WTC11 (cell line): ENCODE measurements at regions of chr3 and their contacts with region 1.

Region 1: GRCh38 chr3:45656575-45657363 is 32.4 kb upstream of the SACM1L start:
- DNase-seq: peak; percentile 87
- ATAC-seq: peak; percentile 92
- H3K4me3 Mint-ChIP-seq: no peak overlapping the region
- H3K27ac Mint-ChIP-seq: no peak overlapping the region; the same call in 1 of the 2 replicates
- H3K4me1 Mint-ChIP-seq: peaks cover 21% of the 10 kb centered on the region
- H3K27me3 Mint-ChIP-seq: no peaks in the 10 kb centered on the region
- CTCF ChIP-seq: peak; percentile 85

Region 2: DNA sequence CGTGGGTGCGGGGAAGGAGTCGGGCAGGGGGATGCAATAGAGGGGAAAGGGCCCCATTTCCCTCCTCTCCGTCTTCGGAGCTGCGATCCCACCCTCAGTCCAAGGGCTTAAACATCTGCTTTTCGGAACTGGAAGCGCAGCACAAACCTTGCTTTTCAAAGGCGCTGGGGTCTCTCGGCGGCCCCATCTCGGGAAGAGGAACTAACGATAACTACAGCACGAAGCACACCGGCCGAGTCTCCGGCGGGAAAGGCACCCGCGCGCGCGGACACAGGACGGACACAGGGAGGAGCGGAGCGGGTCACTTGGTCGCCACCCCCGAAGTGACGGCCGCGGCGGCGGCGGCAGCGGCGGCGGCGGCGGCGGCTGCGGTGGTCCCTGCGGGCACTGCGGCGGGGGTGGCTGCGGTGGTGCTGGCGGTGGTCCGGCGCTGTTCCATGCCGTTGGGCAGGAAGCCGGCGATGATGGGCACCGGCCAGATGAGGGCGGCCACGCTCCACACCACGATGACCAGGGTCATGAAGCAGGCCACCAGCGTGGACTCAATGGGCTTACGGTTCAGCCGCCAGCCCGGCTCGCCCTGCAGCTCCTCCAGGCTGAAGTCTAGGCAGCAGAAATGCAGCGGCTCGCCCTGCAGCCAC is 431.8 kb before region 1 on chr3:
- CTCF ChIA-PET with region 1: interaction called, 12 read pairs
- POLR2A ChIA-PET with region 1: no interaction called
- DNase-seq: peak; percentile 81
- ATAC-seq: peak; percentile 73
- H3K4me3 Mint-ChIP-seq: peak overlapping the region; percentile 91
- H3K27ac Mint-ChIP-seq: no peak overlapping the region
- H3K4me1 Mint-ChIP-seq: peaks cover 34% of the 10 kb centered on the region
- H3K27me3 Mint-ChIP-seq: peaks cover 33% of the 10 kb centered on the region
- CTCF ChIP-seq: peak; percentile 17; the same call in 1 of the 2 replicates

Region 3: DNA sequence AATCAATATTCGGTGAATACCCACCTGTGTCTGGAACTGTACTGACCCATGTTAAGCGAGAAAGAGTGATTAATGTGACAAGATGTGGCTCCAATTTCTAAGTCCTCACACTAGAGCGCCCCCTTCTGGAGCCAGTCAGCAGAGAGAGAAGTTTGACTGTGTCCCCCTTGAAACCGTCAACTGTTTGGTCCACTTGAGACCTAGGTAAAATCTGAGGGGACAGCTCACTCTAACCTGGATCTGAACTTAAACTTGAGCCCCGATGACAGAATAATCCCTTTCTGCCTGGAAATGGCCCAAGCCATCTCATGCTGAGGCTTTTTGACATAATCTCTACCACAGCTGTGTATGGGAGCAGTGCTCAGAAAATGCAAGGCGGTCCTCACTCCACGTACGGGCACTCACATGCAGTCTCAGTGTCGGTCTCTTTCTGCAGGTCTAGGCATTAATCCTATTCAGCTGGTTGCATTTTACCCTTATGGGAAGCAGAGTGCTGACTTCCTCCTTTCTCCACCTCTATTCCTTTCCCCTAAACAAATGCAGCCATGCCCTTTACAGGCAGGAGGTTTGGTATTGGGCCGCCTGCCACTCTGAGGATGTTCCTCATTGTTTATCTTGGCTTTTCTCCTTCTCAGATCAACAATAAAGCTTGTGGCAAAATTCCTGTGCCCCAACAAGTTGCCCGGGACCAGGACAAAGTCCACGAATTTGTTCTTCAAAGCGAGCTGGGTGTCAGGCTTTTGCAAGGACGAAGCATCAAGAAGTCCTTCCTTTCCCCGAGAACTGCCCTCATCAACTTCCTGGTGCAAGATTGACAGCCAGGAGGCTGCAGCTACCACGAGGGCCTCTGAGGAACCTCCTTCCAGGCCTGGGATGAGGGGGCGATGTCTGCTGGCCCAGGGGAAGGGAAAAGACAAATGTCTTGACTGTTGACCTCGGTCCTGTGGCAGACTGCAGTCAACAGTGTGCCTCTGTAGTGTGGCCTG is 109.8 kb before region 1 on chr3:
- CTCF ChIA-PET with region 1: interaction called, 46 read pairs
- POLR2A ChIA-PET with region 1: interaction called, 3 read pairs
- DNase-seq: peak; percentile 79
- ATAC-seq: peak; percentile 63
- H3K4me3 Mint-ChIP-seq: no peak overlapping the region
- H3K27ac Mint-ChIP-seq: no peak overlapping the region
- H3K4me1 Mint-ChIP-seq: no peaks in the 10 kb centered on the region
- H3K27me3 Mint-ChIP-seq: no peaks in the 10 kb centered on the region
- CTCF ChIP-seq: peak; percentile 66; the same call in 1 of the 2 replicates

Region 4: GRCh38 chr3:45593708-45594609 is 62.8 kb before region 1 on chr3:
- CTCF ChIA-PET with region 1: interaction called, 34 read pairs
- POLR2A ChIA-PET with region 1: no interaction called
- DNase-seq: peak; percentile 76
- ATAC-seq: peak; percentile 80
- H3K4me3 Mint-ChIP-seq: peak overlapping the region; percentile 77
- H3K27ac Mint-ChIP-seq: no peak overlapping the region
- H3K4me1 Mint-ChIP-seq: peaks cover 38% of the 10 kb centered on the region
- H3K27me3 Mint-ChIP-seq: no peaks in the 10 kb centered on the region
- CTCF ChIP-seq: no peak

Region 5: DNA sequence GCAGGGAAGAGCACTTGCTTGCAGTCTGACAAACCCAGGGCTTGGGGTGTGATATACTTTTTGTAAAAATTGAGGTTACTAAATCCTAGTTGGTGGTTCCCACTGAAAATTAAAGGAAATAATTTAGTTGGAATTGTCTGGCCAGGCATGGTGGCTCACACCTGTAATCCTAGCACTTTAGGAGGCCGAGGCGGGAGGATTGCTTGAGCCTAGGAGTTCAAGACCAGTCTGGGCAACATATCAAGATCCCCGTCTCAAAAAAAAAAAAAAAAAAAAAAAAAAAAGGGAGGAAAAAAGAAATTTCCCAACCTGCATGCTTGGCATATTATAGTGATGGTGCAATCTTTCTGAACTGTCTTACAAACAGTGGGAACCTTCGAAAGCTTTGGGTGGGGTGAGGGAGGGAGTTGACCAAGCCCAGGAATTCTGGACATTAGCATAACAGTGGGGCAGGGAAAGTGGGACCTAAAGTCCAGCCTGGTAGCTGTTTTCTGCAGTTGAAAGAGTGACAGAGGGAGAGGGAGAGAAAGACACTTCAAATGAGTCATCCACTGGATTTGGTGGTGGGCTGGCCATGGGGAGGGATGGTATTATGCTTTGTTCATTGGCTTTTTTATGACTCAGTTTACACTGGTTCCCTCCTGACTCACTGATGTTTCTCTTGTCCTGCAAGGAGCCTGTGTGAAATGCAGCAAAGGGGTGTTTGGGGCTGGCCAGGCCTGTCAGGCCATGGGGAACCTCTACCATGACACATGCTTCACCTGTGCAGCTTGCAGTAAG is 21.1 kb before region 1 on chr3:
- CTCF ChIA-PET with region 1: interaction called, 25 read pairs
- POLR2A ChIA-PET with region 1: no interaction called
- DNase-seq: peak; percentile 38
- ATAC-seq: peak; percentile 72
- H3K4me3 Mint-ChIP-seq: peak overlapping the region; percentile 22; the same call in 1 of the 2 replicates
- H3K27ac Mint-ChIP-seq: peak overlapping the region; percentile 95
- H3K4me1 Mint-ChIP-seq: peaks cover 52% of the 10 kb centered on the region
- H3K27me3 Mint-ChIP-seq: no peaks in the 10 kb centered on the region
- CTCF ChIP-seq: no peak

Region 6: DNA sequence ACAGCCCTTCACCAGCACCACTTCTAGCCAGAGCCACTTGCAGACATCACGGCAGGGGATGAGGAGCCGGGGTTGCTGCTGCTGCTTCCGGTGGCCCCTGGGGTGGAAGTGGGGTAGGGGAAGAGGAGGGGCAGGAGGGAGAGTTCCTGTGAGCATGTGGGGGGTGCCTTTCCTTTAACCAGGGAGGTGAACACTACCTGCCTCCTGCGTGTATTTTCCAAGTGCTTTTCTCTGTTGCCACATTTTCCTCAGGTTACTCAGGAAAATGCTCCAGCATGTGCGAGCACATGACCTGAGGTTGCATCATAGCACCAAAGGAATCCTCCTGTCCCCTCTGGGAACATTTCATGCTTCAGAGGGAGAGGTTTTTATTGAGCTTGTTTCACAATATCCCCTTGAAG is 20.3 kb after region 1 on chr3:
- CTCF ChIA-PET with region 1: interaction called, 16 read pairs
- POLR2A ChIA-PET with region 1: no interaction called
- DNase-seq: no peak
- ATAC-seq: peak; percentile 9
- H3K4me3 Mint-ChIP-seq: no peak overlapping the region
- H3K27ac Mint-ChIP-seq: peak overlapping the region; percentile 93
- H3K4me1 Mint-ChIP-seq: peaks cover 58% of the 10 kb centered on the region
- H3K27me3 Mint-ChIP-seq: no peaks in the 10 kb centered on the region
- CTCF ChIP-seq: no peak

Region 7: GRCh38 chr3:45760878-45761711 is 104.3 kb after region 1 on chr3:
- CTCF ChIA-PET with region 1: interaction called, 10 read pairs
- POLR2A ChIA-PET with region 1: no interaction called
- DNase-seq: peak; percentile 68
- ATAC-seq: peak; percentile 87
- H3K4me3 Mint-ChIP-seq: no peak overlapping the region
- H3K27ac Mint-ChIP-seq: 0 out of 2 replicates have a peak overlapping the region, but pooled peaks have one; percentile 6
- H3K4me1 Mint-ChIP-seq: peaks cover 23% of the 10 kb centered on the region
- H3K27me3 Mint-ChIP-seq: no peaks in the 10 kb centered on the region; the same call in 1 of the 2 replicates
- CTCF ChIP-seq: peak; percentile 61

Region 8: DNA sequence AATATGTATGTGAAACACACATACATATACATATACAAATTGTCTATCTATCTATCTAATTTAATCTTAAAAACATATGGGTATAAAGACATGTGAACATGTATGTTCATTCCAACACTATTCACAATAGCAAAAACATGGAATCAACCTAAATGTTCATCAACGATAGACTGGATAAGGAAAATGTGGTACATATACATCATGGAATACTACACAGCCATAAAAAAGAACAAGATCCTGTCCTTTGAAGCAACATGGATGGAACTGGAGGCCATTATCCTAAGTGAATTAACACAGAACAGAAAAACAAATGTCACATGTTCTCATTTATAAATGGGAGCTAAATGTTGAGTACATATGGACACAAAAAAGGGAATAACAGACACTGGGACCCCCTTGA is 235.4 kb after region 1 on chr3:
- CTCF ChIA-PET with region 1: no interaction called
- POLR2A ChIA-PET with region 1: no interaction called
- DNase-seq: no peak
- ATAC-seq: no peak
- H3K4me3 Mint-ChIP-seq: no peak overlapping the region
- H3K27ac Mint-ChIP-seq: no peak overlapping the region
- H3K4me1 Mint-ChIP-seq: peaks cover 6% of the 10 kb centered on the region; the same call in 1 of the 2 replicates
- H3K27me3 Mint-ChIP-seq: peaks cover 2% of the 10 kb centered on the region; the same call in 1 of the 2 replicates
- CTCF ChIP-seq: no peak